Activated CD4-positive, alpha-beta T cell treated with anti-CD3 and anti-CD28 coated beads for 36 hours (primary cell): ENCODE measurements at regions of chr17 and their contacts with region 1.

Region 1: DNA sequence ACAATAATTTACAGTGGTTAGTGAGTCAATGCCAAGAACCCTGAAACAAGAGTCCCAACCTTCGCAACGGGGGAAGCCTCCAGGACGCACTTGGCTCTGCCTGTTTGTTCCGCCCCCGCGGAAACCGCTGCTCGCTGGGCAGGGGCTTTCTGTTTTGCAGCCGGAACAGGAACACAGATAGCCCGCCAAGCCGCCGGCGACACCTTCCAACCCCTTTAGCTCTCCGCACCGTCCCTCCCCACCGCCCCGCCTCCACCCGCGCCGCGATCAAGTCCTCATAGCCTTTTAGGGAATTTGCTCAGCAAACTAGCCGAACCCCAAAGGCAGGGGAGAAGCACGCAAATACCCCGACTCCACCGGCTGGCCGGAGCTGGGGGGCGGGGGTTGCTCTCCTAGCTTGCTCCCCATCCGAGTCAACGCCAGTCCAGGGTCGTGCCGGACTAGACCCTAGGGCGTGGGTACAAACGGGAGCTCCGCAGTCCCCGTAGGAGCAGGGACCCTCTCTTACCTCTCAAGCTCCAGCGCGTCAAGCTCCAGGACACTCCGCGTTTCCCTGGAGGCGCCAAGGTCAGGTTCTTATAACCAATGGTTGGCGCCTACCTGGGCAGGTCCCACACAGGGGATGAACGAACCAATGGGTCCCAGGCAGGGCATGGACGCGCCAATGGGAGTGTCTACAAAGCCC is at the start of gene SLFN13:
- DNase-seq: peak; percentile 97
- ATAC-seq: peak; percentile 97
- H3K4me3 Mint-ChIP-seq: peak within 1 kb of the TSS; percentile 46
- H3K27ac Mint-ChIP-seq: peak within 1 kb of the TSS; percentile 51
- H3K4me1 Mint-ChIP-seq: peaks cover 15% of the 10 kb centered on the region
- H3K27me3 Mint-ChIP-seq: no peaks in the 10 kb centered on the region
- total RNA-seq, gene SLFN13: 18.6 to 22.5 TPM

Region 2: GRCh38 chr17:35432176-35433074 is 15.9 kb before region 1 on chr17 and contains the start of gene SLFN12:
- CTCF ChIA-PET with region 1: no interaction called
- POLR2A ChIA-PET with region 1: no interaction called
- intact Hi-C with region 1: loop called in 1 of 2 experiments (anchors 1 kb)
- DNase-seq: peak; percentile 63
- ATAC-seq: peak; percentile 83
- H3K4me3 Mint-ChIP-seq: peak within 1 kb of the TSS; percentile 90
- H3K27ac Mint-ChIP-seq: peak within 1 kb of the TSS; percentile 98
- H3K4me1 Mint-ChIP-seq: peaks cover 40% of the 10 kb centered on the region
- H3K27me3 Mint-ChIP-seq: no peaks in the 10 kb centered on the region
- total RNA-seq, gene SLFN12: 5.4 TPM